PC-9 (cell line): ENCODE measurements at regions of chr2 and their contacts with region 1.

Region 1: DNA sequence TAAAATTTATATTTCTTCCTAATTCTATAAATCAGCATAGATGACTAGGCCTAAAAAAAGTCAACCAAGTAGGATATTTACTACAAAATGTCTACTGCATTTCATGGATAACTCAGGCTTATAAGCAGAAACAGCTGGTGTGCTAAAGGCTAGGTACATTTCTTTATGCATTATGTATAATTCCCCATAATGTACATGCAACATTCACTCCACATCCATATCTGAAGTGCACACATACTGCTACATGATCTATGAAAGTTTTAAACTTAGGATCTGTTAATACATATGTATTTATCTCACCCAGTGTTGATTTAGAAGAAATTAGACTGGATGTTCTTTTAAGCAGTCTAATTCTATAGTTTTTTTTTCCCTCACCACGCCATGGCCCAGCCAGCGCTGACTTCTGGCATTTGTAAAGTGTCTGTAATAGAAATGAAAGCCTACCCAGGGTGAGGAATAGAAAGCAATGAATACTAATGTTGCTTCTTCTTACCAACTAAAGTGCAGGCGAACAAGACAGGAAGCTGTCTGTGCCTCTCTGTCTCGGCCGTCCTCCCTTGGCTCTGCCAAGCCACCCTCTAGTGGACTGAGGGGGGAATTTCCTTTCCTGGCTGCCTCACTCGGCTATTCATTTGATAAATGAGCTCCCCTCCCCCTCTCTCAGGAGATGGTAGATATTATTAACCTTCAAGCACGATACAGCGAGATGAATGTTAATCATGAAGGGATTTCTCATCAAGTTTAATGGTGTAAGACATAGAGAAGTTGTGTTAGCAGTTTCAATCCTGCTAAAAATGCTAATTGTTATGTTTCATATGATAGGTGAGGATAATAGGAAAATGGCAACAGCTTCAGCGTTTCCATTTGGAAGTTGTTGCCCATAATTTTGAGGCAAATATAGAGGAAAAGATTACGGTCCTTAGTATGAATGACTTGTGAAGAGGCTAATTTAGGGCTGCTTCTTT is 384.5 kb downstream of the MTX2 start:
- DNase-seq: peak in 1 of 2 experiments; percentile 64
- H3K4me3 ChIP-seq: no peak overlapping the region
- H3K27ac ChIP-seq: no peak overlapping the region
- H3K4me1 ChIP-seq: no peaks in the 10 kb centered on the region
- H3K27me3 ChIP-seq: peaks cover 8% of the 10 kb centered on the region; the same call in 1 of the 2 replicates
- CTCF ChIP-seq: peak; percentile 84

Region 2: GRCh38 chr2:175690113-175690837 is 963.5 kb before region 1 on chr2:
- CTCF ChIA-PET with region 1: no interaction called
- POLR2A ChIA-PET with region 1: no interaction called
- intact Hi-C with region 1: loop called (anchors 10 kb)
- DNase-seq: peak; percentile 38 to 64
- H3K4me3 ChIP-seq: no peak overlapping the region
- H3K27ac ChIP-seq: no peak overlapping the region
- H3K4me1 ChIP-seq: no peaks in the 10 kb centered on the region
- H3K27me3 ChIP-seq: peaks cover 31% of the 10 kb centered on the region
- CTCF ChIP-seq: peak; percentile 94

Region 3: DNA sequence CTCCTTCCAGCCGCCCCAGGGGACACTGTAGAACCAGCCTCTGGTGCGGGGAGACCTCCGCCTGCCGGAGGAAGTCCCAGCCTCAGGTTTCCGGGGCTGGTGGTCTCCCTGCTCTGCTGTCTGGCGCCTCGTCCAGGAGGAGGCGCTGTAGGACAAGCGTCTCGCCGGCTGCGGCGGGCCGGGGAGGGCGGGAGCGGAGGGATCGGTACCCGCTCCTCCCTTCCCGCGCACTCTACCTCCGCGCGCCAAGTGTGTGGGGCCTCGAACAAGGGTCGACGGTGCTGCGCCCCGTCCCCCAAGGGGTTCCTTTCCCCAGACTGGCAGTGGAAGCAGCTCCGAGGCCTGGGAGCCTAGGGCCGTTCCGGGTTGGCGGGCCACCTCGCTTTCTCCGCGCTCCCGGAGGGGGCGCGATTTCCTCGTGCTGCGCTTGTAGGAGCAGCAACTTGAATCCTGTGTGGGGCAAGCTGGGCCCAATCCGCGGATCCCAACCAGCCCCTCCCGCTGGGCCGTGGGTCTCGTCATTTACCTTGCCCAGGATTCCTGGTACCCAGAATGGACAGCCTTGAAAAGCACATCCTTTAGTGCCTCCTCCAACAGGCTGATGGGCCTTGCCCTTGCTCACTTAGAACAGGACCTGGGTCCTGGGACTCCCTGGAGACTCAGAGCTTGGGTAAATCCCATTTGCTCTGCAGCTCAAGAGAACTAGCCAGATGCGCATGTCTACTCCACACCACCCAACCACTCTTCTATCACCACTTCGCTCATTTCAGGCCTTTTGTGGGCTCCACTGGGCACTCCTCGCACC is 513.0 kb before region 1 on chr2:
- CTCF ChIA-PET with region 1: interaction called, 11 read pairs
- POLR2A ChIA-PET with region 1: no interaction called
- intact Hi-C with region 1: loop called (anchors 1 kb)
- DNase-seq: peak in 1 of 2 experiments; percentile 60
- H3K4me3 ChIP-seq: no peak overlapping the region
- H3K27ac ChIP-seq: no peak overlapping the region
- H3K4me1 ChIP-seq: no peaks in the 10 kb centered on the region
- H3K27me3 ChIP-seq: peaks cover 29% of the 10 kb centered on the region; the same call in 1 of the 2 replicates
- CTCF ChIP-seq: peak; percentile 44

Region 4: DNA sequence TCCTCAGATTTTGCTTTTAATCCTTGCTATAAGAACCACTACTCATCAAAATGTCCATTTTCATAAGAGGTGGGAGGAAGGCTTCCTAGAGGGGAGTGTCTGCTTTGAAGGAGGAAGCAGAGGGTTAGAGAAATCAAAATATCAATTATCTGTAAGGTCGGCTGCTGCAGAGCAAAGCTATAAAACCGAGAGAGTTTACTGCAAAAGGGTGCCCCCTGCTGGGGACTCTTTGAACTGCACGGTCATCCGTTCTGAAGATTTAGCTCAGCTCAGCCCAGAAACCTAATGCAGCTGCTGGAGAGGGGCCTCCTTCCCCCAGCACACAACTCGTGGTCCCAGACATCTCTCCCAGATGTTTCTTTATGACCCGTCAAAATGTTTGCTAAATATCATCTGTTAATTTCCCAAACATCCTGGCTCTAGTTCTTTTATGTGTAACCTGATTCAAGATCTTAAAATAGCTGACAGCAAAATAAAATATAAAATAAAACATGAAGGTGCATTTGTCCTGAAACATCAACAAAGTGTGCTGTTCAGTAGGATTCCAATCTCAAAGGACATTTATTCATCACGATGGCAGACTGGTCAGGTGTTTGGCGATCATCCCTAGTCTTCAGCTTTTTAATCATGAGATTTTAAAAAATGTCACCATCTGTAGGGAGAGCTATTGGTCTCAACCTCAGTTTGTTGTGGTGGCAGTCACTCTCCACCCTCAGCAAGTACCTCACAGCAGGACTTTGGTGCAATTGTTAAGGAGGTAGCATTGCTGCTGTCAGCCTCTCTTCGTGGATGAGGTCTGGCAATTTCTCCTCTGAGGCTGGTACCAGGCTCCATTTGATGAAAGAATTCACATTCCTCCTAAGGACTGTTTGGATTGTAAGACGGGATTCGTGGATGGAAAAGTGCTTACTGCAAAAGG is 198.6 kb before region 1 on chr2:
- CTCF ChIA-PET with region 1: interaction called, 9 read pairs
- POLR2A ChIA-PET with region 1: no interaction called
- intact Hi-C with region 1: loop called (anchors 5 kb)
- DNase-seq: peak; percentile 44 to 80
- H3K4me3 ChIP-seq: no peak overlapping the region
- H3K27ac ChIP-seq: no peak overlapping the region
- H3K4me1 ChIP-seq: no peaks in the 10 kb centered on the region
- H3K27me3 ChIP-seq: no peaks in the 10 kb centered on the region
- CTCF ChIP-seq: peak; percentile 100

Region 5: GRCh38 chr2:176669398-176670174 is 15.8 kb after region 1 on chr2:
- CTCF ChIA-PET with region 1: interaction called, 10 read pairs
- POLR2A ChIA-PET with region 1: no interaction called
- intact Hi-C with region 1: no loop called
- DNase-seq: no peak
- H3K4me3 ChIP-seq: no peak overlapping the region
- H3K27ac ChIP-seq: no peak overlapping the region
- H3K4me1 ChIP-seq: 0 out of 2 replicates have a peak, but pooled peaks cover 6% of the 10 kb centered on the region
- H3K27me3 ChIP-seq: no peaks in the 10 kb centered on the region
- CTCF ChIP-seq: no peak